ENCODE measurements at regions of chr15 and their contacts with region 1.

Region 1: DNA sequence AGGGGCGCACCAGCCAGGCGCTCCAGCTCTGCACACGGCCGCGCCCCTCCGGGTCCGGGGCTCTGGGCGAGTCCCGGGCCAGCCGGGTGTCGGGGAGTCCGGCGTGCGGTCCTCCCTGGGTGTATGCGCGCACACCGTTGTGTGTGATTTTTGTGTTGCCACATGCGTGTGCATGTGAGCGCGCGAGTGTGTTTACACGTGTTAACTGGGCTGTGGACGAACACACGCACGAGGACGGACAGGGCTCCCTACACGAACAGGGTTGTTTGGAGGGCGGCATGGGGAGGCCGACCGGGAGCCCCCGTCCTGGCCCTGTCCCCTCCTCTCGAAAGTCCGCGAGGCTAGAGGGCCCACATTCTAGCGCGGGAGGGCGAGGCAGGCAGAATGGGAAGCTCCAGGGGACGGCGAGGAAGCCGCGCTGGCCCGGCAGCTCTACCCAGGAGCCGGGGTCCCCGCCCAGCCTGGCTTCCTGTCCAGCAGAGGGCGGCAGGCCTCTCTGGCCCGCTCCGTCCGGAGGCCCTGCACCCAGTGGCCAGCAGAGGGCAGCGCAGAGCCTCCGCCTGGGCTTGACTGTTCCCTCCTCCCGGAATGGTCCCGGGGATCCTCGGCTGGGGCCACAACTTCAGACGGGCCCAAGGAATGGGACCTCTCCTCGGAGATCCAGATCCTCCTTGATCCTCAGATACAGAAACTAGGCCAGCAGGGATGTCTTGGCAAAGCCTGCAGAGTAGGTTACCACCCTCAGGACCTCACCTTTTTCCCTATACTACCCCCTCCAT is 611 bp upstream of the LINGO1 start:
- DNase-seq: peak; percentile 83
- ATAC-seq: peak; percentile 86
- H3K4me3 Mint-ChIP-seq: no peak overlapping the region
- H3K27ac Mint-ChIP-seq: no peak overlapping the region
- H3K4me1 Mint-ChIP-seq: peaks cover 7% of the 10 kb centered on the region
- H3K27me3 Mint-ChIP-seq: peaks cover 43% of the 10 kb centered on the region

Region 2: DNA sequence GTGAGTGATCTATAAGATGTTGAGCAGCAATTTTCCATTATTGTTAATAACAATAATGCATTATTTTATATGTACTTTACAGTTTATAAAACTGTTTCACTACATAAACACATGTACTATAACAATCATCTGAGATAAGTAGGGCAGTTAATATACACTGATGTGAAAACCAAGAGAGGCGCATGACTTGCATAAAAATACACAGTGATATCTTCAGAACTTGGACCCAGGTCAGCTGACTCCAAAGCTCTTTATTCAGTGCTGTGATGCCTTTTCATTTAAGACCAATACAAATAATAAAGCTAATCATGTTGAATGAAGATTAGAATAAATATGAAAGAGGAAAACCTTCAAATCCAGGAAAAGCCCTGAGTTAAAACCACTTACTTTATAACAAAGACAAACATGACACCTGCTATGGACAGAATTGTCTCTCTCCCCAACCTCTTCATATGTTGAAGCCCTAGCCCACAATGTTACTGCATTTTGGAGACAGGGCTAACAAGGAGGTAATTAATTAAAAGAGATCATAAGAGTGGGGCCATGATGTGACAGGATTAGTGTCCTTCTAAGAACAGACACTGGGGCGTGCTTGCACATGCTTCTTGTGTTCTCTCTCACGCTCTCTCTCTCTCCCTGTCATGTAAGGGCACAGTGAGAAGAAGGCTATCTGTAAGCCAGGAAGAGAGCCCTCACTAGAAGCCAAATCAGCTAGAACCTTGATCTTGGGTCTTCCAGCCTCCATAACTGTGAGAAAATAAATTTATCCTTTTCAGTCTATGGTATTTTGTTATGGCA is 506.6 kb before region 1 on chr15:
- CTCF ChIA-PET with region 1: no interaction called
- POLR2A ChIA-PET with region 1: no interaction called
- intact Hi-C with region 1: loop called in 1 of 2 experiments (anchors 10 kb)
- DNase-seq: no peak
- ATAC-seq: no peak
- H3K4me3 Mint-ChIP-seq: no peak overlapping the region
- H3K27ac Mint-ChIP-seq: no peak overlapping the region
- H3K4me1 Mint-ChIP-seq: peaks cover 3% of the 10 kb centered on the region
- H3K27me3 Mint-ChIP-seq: no peaks in the 10 kb centered on the region

Region 3: GRCh38 chr15:77393471-77393840 is 239.9 kb before region 1 on chr15:
- CTCF ChIA-PET with region 1: no interaction called
- POLR2A ChIA-PET with region 1: no interaction called
- intact Hi-C with region 1: no loop called
- DNase-seq: no peak
- ATAC-seq: no peak
- H3K4me3 Mint-ChIP-seq: no peak overlapping the region
- H3K27ac Mint-ChIP-seq: no peak overlapping the region
- H3K4me1 Mint-ChIP-seq: no peaks in the 10 kb centered on the region
- H3K27me3 Mint-ChIP-seq: no peaks in the 10 kb centered on the region

Region 4: GRCh38 chr15:77784395-77785292 is 151.3 kb after region 1 on chr15:
- CTCF ChIA-PET with region 1: no interaction called
- POLR2A ChIA-PET with region 1: no interaction called
- intact Hi-C with region 1: loop called in 1 of 2 experiments (anchors 10 kb)
- DNase-seq: peak; percentile 66
- ATAC-seq: peak; percentile 57
- H3K4me3 Mint-ChIP-seq: no peak overlapping the region
- H3K27ac Mint-ChIP-seq: no peak overlapping the region
- H3K4me1 Mint-ChIP-seq: no peaks in the 10 kb centered on the region
- H3K27me3 Mint-ChIP-seq: no peaks in the 10 kb centered on the region

Region 5: DNA sequence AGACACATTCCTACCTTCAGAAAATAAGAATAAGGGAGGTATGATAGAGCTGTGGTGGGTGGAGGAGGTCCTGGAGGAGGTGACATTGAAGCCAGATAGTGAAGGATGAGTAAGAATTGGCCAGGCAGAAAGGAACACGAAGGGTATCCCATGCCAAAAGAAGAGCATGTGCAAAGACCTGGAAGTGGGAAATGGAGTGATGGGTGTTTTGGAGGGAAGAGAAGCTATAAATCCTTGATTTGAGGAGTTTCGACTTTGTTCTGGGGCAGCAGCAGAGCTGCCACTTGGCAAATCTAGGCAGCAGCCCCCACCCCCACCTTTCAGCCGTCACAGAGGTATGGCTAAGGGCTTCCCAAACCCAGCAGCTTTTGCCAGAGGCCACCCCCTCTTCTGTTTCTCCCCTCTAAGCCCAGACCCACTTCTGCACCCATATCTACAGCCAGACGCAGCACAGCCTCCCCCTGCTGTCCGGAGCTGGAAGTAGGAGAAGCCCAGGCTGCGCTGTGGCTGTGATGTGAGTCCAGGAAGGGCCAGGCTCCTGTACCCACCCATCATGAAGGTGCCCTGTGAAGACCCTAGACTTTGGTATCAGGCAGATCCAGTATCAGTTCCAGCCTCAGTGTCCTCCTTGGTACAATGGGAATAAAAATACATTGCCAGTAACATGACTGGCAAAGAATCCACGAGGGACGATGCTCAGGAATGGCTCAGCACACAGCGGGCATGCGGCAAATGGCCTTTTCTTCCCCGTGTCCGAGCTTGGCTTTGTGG is 188.1 kb after region 1 on chr15:
- CTCF ChIA-PET with region 1: interaction called, 14 read pairs
- POLR2A ChIA-PET with region 1: no interaction called
- intact Hi-C with region 1: loop called (anchors 1 kb)
- DNase-seq: peak; percentile 73
- ATAC-seq: peak; percentile 84
- H3K4me3 Mint-ChIP-seq: no peak overlapping the region
- H3K27ac Mint-ChIP-seq: no peak overlapping the region
- H3K4me1 Mint-ChIP-seq: no peaks in the 10 kb centered on the region
- H3K27me3 Mint-ChIP-seq: peaks cover 42% of the 10 kb centered on the region

Region 6: DNA sequence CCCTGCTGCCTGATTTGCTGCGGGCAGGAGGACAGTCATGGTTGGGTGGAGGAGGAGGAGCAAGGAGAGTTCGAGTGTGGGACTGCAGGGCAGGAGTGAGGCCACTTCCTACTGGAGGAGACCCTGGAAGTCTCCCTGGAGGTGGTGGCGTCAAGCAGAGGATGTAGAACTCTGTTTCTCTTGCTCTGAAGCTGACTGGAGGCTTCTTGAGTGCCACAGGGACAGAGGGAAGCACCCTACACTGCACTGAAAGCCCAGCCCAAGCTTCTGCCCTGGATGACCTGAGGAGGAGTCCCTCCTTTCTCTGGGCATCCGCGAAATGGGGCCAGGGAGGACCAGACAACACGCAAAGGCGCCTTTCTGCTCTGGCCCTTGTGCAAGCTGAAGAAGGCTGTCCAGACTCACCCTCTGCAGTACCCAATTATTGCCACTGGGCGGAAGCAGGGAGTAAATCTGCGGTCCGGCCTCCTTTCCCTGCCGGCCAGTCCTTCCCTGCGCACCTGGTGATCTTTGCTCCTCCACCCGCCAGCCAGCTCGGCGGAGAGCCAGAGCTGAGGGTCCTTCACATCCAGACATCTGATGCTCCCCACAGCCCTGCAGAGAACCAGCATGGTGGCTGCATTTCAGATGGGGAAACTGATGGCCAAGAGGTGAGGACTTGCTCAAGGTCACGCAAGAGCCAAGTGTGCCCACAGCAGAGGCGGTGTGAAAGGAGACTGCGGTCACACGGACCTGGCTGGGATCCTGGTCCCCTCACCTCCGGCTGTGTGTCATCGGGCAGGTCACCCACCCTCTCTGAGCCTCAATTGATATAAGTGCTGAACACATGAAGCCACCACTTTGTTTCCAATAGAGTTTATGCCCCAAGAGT is 237.1 kb after region 1 on chr15:
- CTCF ChIA-PET with region 1: interaction called, 3 read pairs
- POLR2A ChIA-PET with region 1: no interaction called
- intact Hi-C with region 1: loop called in 1 of 2 experiments (anchors 1 kb)
- DNase-seq: peak; percentile 62
- ATAC-seq: peak; percentile 58
- H3K4me3 Mint-ChIP-seq: no peak overlapping the region
- H3K27ac Mint-ChIP-seq: no peak overlapping the region
- H3K4me1 Mint-ChIP-seq: no peaks in the 10 kb centered on the region
- H3K27me3 Mint-ChIP-seq: no peaks in the 10 kb centered on the region

Measured in activated CD4-positive, alpha-beta T cell treated with anti-CD3 and anti-CD28 coated beads for 36 hours (primary cell).